Activated CD4-positive, alpha-beta memory T cell treated with anti-CD3 and anti-CD28 coated beads for 36 hours (primary cell): ENCODE measurements at regions of chr11 and their contacts with region 1.

Region 1: DNA sequence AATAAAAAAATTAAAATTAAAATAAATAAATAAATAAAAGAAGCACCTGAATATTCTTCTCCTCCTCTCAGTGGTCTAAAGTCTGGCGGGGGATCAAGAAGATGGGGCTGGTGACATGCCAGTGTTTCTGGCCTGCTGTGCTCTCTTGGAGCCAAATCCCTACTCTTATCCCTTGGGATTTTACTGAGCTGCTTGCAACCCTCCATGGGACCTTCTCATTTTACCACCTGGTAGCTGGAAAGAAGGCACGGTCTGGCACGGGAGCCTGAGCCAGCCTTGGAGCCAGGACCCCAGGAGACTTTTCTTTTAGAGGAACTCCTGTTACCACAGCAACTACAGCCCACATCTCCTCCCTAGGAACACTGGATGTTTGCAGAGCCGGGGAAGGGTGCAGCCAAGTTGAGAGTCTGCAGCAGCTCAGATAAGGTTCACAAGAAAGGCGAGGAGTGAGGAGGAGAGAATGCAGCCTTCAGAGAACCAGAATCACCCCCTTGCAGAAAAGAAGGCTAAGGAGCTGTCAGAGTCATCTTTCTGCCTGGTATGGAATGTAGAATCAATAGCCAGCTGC is 21.4 kb downstream of the CD6 start:
- DNase-seq: peak; percentile 19
- H3K4me3 Mint-ChIP-seq: peak overlapping the region; percentile 68
- H3K27ac Mint-ChIP-seq: peak overlapping the region; percentile 97
- H3K4me1 Mint-ChIP-seq: peaks cover 81% of the 10 kb centered on the region
- H3K27me3 Mint-ChIP-seq: no peaks in the 10 kb centered on the region

Region 2: GRCh38 chr11:61004180-61004611 is 11.3 kb after region 1 on chr11:
- CTCF ChIA-PET with region 1: interaction called, 7 read pairs
- POLR2A ChIA-PET with region 1: interaction called, 44 read pairs
- intact Hi-C with region 1: loop called (anchors 1 kb)
- DNase-seq: peak; percentile 75
- H3K4me3 Mint-ChIP-seq: peak overlapping the region; percentile 75
- H3K27ac Mint-ChIP-seq: peak overlapping the region; percentile 97
- H3K4me1 Mint-ChIP-seq: peaks cover 82% of the 10 kb centered on the region
- H3K27me3 Mint-ChIP-seq: no peaks in the 10 kb centered on the region